Activated T-helper 1 cell treated with anti-CD3 and anti-CD28 coated beads, Interleukin-12 subunit alpha, Interleukin-12 subunit beta, Interleukin-2, Interleukin-4 antibody, amounts not matched to agents 30 ng/mL and 10 ng/mL and 1 ng/mL, durations not matched to agents 14 hours and 24 hours and 36 hours (primary cell): ENCODE measurements at regions of chr6 and their contacts with region 1.

Region 1: DNA sequence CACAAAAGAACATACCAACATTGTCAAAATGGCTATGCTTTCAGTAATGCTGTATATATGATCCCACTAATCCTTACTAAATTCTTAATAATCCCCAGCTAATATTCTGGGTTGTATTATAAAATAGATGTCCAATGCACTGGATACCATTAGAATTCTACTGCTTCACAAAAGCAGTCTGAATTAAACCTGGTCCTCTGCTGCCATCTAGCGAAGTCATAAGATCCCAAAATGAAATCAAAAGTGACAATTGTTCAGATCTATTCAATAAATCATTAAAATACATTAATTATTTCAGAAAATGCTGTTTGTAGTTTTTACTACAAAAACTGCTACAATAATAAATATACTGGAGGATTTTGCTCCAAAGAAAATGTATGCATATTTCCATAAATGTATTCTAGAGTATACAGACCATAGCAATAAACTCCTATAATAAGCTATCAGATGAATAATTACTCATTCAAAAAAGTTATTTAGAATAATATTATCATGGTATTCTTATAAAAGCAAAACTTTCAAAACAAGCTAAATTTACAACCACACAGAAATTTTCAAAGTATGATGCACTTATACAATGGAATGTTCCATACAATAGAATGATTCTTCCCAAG is 92.6 kb downstream of the RNGTT start:
- DNase-seq: peak; percentile 17
- H3K4me3 Mint-ChIP-seq: no peak overlapping the region
- H3K27ac Mint-ChIP-seq: no peak overlapping the region
- H3K4me1 Mint-ChIP-seq: peaks cover 44% of the 10 kb centered on the region
- H3K27me3 Mint-ChIP-seq: no peaks in the 10 kb centered on the region

Region 2: DNA sequence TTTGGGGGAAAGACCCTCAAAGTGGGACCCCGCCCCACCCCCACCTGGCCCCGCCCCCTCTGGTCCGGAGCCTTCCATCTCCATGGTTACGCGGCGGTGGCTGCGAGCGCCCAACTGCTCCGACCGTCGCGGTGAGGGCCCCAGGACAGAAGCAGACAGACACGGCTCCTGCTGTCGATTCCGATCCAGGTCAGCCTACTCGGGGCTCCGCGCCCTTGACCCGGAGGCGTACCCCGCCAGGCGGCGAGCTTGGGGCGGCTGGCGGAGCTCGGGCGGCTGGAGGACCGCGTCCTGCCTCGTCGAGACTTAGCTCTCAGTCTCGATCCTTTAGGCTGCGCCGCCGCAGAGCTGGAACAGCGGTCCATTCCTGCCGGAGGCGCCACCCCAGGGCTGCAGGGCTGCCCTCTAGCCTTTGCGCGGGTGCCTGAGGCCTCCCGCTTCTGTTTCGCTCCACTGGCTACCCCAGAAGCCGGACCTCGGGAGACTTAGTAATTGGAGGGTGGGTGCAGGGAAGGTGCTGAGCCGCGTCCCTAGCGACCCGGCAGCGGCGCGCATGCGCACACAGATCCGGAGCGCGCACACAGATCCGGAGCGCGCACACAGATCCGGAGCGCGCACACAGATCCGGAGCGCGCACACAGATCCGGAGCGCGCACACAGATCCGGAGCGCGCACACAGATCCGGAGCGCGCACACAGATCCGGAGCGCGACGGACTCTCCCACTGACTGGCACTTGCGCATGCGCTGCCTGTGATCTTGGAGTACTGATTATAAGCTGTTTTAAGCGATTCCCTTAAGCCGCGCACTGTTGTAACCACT is 1462.7 kb before region 1 on chr6 and contains the start of gene CFAP206:
- intact Hi-C with region 1: loop called (anchors 5 kb)
- DNase-seq: peak; percentile 66
- H3K4me3 Mint-ChIP-seq: peak within 1 kb of the TSS; percentile 84
- H3K27ac Mint-ChIP-seq: peak within 1 kb of the TSS; percentile 76
- H3K4me1 Mint-ChIP-seq: peaks cover 16% of the 10 kb centered on the region
- H3K27me3 Mint-ChIP-seq: peaks cover 28% of the 10 kb centered on the region
- total RNA-seq, gene CFAP206: 0.20 TPM in 1 of 2 replicates, not detected in the other

Region 3: DNA sequence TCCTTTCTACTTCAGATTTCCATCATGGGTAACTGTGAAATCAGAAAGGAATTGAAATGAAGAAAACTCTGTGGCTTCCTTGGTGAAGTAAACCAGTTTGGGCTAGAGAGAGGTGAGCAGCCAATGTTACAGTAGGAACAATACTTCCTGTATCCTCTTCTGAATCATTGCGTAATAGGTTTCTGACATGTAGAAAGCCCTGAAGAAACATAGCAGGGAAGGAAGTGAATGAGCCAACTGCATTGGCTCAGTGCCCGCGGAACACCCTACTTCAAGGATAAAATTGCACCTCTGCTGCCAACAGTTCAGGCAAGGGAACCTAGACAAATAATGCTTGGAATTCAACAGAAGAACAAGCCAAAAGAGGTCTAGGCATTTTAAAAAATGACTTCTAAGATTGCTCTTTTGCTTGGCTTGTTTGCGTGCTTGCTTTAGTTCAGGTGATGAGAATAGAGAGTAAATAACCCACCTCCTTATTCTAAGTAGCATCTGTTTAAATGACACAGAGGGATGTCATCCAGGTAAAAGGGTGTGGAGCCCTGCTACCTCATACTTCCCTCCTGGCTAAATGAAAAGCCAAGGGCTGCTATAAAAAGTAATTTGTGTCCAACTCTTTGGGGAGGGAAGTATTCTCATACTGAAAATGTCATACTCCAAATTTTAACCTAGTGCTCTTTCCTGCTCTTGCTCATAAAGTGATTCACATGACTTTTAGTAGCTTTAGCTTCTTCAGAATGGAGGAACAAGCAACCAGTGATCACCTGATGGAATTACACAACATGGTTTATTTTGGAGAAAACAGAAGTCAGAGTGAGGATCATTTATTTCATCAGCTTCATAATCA is 1138.8 kb before region 1 on chr6:
- intact Hi-C with region 1: loop called (anchors 10 kb)
- DNase-seq: no peak
- H3K4me3 Mint-ChIP-seq: no peak overlapping the region
- H3K27ac Mint-ChIP-seq: peak overlapping the region; percentile 67
- H3K4me1 Mint-ChIP-seq: peaks cover 27% of the 10 kb centered on the region
- H3K27me3 Mint-ChIP-seq: peaks cover 2% of the 10 kb centered on the region

Region 4: GRCh38 chr6:87929843-87930288 is 941.0 kb before region 1 on chr6:
- intact Hi-C with region 1: loop called (anchors 1 kb)
- DNase-seq: peak; percentile 28
- H3K4me3 Mint-ChIP-seq: no peak overlapping the region
- H3K27ac Mint-ChIP-seq: no peak overlapping the region
- H3K4me1 Mint-ChIP-seq: no peaks in the 10 kb centered on the region
- H3K27me3 Mint-ChIP-seq: peaks cover 9% of the 10 kb centered on the region

Region 5: DNA sequence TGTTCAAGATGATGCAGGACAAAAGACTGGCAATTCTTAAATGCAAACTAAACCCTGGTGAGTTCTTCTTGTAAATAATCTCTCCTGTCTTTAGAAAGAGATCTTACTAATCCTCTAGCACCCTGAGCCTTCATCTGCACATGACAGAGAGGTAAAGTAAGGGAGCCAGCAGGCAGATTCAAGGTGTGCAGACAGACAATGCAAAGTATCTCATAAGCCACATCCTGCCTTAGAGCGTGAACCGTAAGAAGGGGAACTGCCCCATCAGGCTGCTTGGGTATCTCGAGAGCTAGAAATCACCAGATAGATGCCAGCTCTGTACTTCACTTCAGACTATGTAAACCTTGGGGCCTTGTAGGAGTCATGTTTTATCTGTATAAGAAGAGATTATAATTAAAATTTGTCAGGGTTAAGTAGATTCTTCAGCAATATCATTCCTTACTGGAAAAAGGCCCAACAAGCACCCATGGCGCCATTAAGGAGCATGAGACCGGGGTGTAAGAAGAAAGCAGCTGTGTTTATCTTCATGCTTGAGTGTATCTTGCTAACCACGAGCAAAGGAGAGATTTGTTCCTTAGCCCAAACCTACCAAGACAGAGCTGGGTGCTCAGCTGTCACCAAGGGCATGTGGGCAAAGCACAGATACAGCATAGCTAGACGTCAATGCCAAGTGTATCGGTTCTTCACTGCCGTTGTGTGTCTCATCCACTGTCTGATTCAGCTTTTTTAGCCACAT is 729.1 kb before region 1 on chr6:
- intact Hi-C with region 1: no loop called
- DNase-seq: no peak
- H3K4me3 Mint-ChIP-seq: no peak overlapping the region
- H3K27ac Mint-ChIP-seq: no peak overlapping the region
- H3K4me1 Mint-ChIP-seq: no peaks in the 10 kb centered on the region
- H3K27me3 Mint-ChIP-seq: no peaks in the 10 kb centered on the region

Region 6: GRCh38 chr6:88443554-88443953 is 427.3 kb before region 1 on chr6:
- intact Hi-C with region 1: no loop called
- DNase-seq: no peak
- H3K4me3 Mint-ChIP-seq: no peak overlapping the region
- H3K27ac Mint-ChIP-seq: no peak overlapping the region
- H3K4me1 Mint-ChIP-seq: no peaks in the 10 kb centered on the region
- H3K27me3 Mint-ChIP-seq: peaks cover 1% of the 10 kb centered on the region